CD4-positive, alpha-beta memory T cell (primary cell): ENCODE measurements at regions of chr7 and their contacts with region 1.

Region 1: DNA sequence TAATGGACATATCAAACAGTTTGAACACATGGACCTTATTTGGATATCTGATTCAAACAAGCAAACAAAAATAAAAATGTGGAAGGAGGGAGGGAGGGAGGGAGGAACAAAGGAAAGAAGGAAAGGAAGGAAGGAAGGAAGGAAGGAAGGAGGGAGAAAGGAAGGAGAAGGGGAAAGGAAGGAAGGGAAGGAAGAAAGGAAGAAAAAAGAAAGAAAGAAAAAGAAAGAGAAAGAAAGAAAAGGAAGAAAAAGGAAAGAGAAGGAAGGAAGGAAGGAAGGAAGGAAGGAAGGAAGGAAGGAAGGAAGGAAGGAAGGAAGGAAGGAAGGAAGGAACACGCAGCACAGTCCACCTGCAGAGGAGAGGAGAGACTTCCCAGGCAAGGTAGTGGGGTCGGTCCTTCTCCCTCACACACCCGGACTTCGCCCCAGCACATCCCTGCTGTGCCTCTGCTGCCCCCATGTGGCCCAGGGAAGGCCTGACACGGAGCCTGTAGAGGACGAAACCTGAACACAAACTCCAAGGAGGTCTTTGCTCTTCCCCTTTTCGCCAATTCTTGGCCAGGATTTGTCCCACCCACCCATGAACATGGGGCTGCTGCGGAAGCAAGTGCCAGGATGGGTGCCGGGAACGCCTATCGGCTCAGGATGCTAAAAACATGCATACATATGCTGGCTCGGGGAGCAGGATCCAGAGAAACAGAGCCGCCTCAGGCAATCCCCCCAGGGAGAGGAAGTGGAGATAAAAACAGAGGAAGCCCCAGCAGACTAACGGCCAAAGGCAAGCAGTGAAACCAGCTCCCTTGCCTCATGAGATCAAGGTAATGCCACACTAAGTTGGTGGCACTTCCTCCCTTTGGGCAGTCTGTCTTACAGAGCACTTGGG is 52.3 kb upstream of the DGKI start:
- DNase-seq: peak; percentile 58 to 74 (median 62)
- H3K4me3 ChIP-seq: no peak overlapping the region
- H3K4me3 Mint-ChIP-seq: peak overlapping the region in 7 of 8 donors; percentile 8 to 66 (median 43)
- H3K27ac ChIP-seq: no peak overlapping the region
- H3K27ac Mint-ChIP-seq: peak overlapping the region; percentile 36 to 81 (median 70)
- H3K4me1 ChIP-seq: peaks cover 9% of the 10 kb centered on the region
- H3K4me1 Mint-ChIP-seq: peaks cover 10 to 21% (median 17%) of the 10 kb centered on the region in 4 donors
- H3K27me3 ChIP-seq: no peaks in the 10 kb centered on the region
- H3K27me3 Mint-ChIP-seq: no peaks in the 10 kb centered on the region

Region 2: GRCh38 chr7:137656227-137656849 is 242.7 kb before region 1 on chr7:
- CTCF ChIA-PET with region 1: interaction called, 12 read pairs
- POLR2A ChIA-PET with region 1: no interaction called
- intact Hi-C with region 1: loop called (anchors 1 kb)
- DNase-seq: peak; percentile 20 to 59 (median 32)
- H3K4me3 ChIP-seq: no peak overlapping the region
- H3K4me3 Mint-ChIP-seq: no peak overlapping the region
- H3K27ac ChIP-seq: no peak overlapping the region
- H3K27ac Mint-ChIP-seq: no peak overlapping the region
- H3K4me1 ChIP-seq: no peaks in the 10 kb centered on the region
- H3K4me1 Mint-ChIP-seq: peaks cover 0 to 4% (median 0%) of the 10 kb centered on the region in 4 donors
- H3K27me3 ChIP-seq: no peaks in the 10 kb centered on the region
- H3K27me3 Mint-ChIP-seq: peaks cover 5% of the 10 kb centered on the region in 2 donors

Region 3: DNA sequence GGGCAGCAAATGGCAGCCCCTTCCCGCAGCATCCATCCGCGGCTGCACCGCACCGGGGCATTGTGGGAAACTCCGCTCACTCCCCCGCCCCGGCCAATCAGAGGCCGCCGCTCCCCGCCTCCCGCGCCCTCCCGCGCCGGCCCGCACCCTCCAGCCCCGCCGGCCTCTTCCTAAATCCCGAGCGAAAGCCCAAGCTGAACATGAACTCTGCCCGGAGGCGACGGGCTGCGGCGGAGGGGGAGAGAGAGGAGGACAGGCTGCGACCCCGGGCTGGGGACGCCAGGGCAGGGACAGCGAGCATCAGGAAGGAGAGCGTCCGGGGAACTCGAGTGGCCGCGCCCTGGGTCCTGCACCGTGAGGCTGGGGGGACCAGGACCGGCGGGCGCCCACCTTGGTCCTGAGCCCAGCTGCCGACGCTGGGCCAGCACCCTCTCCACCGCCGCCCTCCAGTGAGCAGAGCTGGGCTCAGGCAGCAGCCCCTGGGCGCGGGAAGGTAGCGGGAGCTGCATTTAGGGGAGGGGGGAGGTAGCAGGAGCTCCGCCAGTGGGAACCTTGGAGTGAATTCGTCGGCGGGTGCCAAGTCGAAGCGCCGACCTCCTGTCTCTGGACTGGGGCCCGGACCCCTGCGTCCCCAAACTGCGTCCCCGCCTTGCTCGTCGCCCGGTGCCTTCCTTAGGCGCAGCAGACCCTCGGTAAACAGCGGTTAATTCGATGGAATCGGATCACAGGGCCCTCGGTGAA is 52.1 kb before region 1 on chr7 and contains the start of gene DGKI:
- CTCF ChIA-PET with region 1: no interaction called
- POLR2A ChIA-PET with region 1: no interaction called
- intact Hi-C with region 1: no loop called
- DNase-seq: peak in 1 of 5 donors; percentile 2
- H3K4me3 ChIP-seq: no peak within 1 kb of the TSS
- H3K4me3 Mint-ChIP-seq: peak within 1 kb of the TSS; percentile 54 to 83 (median 71)
- H3K27ac ChIP-seq: no peak within 1 kb of the TSS
- H3K27ac Mint-ChIP-seq: peak within 1 kb of the TSS in 1 of 7 donors; percentile 3
- H3K4me1 ChIP-seq: peaks cover 12% of the 10 kb centered on the region
- H3K4me1 Mint-ChIP-seq: peaks cover 4 to 33% (median 13%) of the 10 kb centered on the region in 4 donors
- H3K27me3 ChIP-seq: peaks cover 33% of the 10 kb centered on the region
- H3K27me3 Mint-ChIP-seq: peaks cover 42 to 45% of the 10 kb centered on the region in 2 donors
- total RNA-seq, gene DGKI: 0.11 TPM in 1 of 2 experiments, not detected in the other

Region 4: DNA sequence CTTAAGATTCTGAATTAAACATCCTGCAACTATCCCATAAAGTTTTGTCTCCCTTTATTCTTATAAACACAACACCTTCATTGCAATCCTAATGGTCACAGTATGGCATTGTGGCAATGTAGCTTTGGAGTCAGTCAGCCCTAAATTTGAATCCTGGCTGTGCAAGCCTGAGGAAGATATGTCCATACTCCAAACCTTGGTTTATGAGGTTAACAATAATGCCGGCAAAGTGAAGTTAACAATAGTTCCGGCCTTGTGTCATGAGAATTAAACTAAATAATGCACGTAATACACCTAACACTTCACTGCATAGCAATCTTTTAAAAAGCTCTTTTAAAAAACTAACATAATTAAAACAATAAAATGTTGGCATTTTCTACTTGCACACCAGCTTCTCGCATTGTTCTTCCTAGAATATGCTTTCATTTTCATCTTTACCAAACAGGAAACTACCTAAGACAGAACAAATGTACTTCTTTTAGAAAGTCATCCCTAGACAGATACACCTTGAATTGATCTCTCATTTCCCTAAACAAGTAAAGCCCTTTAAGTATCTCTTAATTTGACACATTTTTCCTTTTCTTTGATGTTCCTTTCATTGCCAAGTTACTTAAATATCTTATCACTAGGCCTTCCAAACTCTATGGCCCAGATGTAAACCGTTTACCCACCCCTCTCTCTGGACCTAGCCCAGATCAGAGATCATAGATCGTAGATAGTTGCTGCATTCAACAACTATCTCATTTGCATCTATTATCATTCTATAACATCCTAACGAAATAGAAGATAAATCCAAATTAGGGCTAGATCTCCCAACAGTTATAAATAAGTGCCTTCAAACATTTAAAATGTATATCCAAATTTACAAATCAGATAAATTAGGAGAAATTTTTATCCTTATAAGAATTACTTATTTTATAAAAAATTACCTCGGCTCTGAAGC is 36.1 kb after region 1 on chr7:
- CTCF ChIA-PET with region 1: interaction called, 20 read pairs
- POLR2A ChIA-PET with region 1: no interaction called
- intact Hi-C with region 1: no loop called
- DNase-seq: peak in 4 of 5 donors; percentile 21 to 43 (median 28)
- H3K4me3 ChIP-seq: peak overlapping the region; percentile 19 to 43
- H3K4me3 Mint-ChIP-seq: peak overlapping the region; percentile 88 to 95 (median 90)
- H3K27ac ChIP-seq: peak overlapping the region; percentile 66
- H3K27ac Mint-ChIP-seq: peak overlapping the region; percentile 87 to 98 (median 97)
- H3K4me1 ChIP-seq: peaks cover 35% of the 10 kb centered on the region
- H3K4me1 Mint-ChIP-seq: peaks cover 37 to 70% (median 50%) of the 10 kb centered on the region in 4 donors
- H3K27me3 ChIP-seq: no peaks in the 10 kb centered on the region
- H3K27me3 Mint-ChIP-seq: no peaks in the 10 kb centered on the region

Region 5: DNA sequence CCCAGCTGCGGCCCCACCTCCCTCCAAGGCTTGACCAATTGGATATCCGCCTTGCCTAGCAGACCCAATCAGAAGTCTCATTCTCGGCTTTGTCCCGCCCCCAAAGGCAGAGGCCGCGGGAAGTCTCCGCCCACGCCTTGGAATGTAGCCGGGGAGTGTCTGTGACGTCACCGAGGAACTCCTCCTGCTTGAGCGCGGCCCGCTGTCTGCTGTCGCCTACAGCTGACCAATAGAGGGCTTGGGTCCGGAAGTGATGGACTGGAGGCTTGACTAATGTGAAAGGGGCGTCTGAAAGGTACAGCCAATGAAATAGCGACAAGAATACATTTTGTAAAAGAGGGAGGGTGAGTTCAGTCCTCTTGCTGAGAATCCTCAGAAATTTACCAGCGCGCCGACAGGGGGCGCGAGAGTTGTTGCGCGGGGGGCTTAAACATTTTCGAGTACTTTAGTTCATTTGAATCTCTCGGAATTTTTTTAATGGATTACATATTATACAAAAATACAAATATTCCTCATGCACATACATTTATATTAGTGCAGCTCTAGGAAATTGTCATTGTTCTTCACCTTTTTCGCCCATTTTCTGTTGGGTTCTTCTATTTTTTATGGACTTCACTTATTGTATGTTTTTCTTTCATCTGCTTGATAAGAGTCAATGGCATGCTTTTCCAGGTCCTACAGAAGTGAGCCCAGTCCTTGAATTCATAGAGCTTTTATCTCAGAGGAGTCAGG is 103.2 kb after region 1 on chr7:
- CTCF ChIA-PET with region 1: interaction called, 594 read pairs
- POLR2A ChIA-PET with region 1: interaction called, 12 read pairs
- intact Hi-C with region 1: no loop called
- DNase-seq: peak; percentile 98 to 99 (median 99)
- H3K4me3 ChIP-seq: peak overlapping the region; percentile 86 to 99
- H3K4me3 Mint-ChIP-seq: peak overlapping the region; percentile 93 to 98 (median 95)
- H3K27ac ChIP-seq: peak overlapping the region; percentile 87
- H3K27ac Mint-ChIP-seq: peak overlapping the region; percentile 81 to 98 (median 92)
- H3K4me1 ChIP-seq: peaks cover 37% of the 10 kb centered on the region
- H3K4me1 Mint-ChIP-seq: peaks cover 28 to 50% (median 35%) of the 10 kb centered on the region in 4 donors
- H3K27me3 ChIP-seq: no peaks in the 10 kb centered on the region
- H3K27me3 Mint-ChIP-seq: no peaks in the 10 kb centered on the region

Region 6: GRCh38 chr7:138151731-138152577 is 252.9 kb after region 1 on chr7:
- CTCF ChIA-PET with region 1: no interaction called
- POLR2A ChIA-PET with region 1: no interaction called
- intact Hi-C with region 1: no loop called
- DNase-seq: no peak
- H3K4me3 ChIP-seq: no peak overlapping the region
- H3K4me3 Mint-ChIP-seq: no peak overlapping the region
- H3K27ac ChIP-seq: no peak overlapping the region
- H3K27ac Mint-ChIP-seq: no peak overlapping the region
- H3K4me1 ChIP-seq: no peaks in the 10 kb centered on the region
- H3K4me1 Mint-ChIP-seq: peaks cover 1 to 5% (median 4%) of the 10 kb centered on the region in 4 donors
- H3K27me3 ChIP-seq: no peaks in the 10 kb centered on the region
- H3K27me3 Mint-ChIP-seq: peaks cover 0 to 12% of the 10 kb centered on the region in 2 donors

Region 7: DNA sequence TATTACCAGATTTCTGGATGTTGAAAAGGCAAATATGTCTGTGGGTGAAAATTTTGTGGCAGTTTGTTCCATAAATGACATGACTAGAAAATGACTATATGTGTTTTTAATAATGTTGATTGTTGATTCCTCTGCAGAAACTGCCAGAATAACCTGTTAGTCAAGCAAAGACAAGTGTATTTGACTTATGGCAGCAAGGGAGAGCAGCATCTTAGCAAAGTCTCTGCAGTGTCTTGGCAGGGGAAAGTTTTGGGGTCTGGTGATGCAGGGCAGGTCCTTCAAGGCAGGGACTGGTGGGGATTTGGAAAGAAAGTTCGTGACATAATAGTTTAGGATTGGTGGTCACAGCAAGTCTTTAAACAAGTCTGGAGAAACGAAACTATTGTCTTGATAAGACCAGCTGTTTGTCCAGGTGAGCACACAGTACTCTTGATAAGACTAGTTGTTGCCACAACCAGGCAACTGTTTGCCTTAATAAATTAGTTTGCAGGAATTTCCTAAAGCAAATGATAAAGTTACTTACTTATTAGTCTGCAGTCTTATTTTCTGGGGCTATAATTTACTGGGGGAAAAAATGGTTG is 313.1 kb after region 1 on chr7:
- CTCF ChIA-PET with region 1: no interaction called
- POLR2A ChIA-PET with region 1: no interaction called
- intact Hi-C with region 1: no loop called
- DNase-seq: no peak
- H3K4me3 ChIP-seq: no peak overlapping the region
- H3K4me3 Mint-ChIP-seq: no peak overlapping the region
- H3K27ac ChIP-seq: no peak overlapping the region
- H3K27ac Mint-ChIP-seq: no peak overlapping the region
- H3K4me1 ChIP-seq: no peaks in the 10 kb centered on the region
- H3K4me1 Mint-ChIP-seq: no peaks in the 10 kb centered on the region
- H3K27me3 ChIP-seq: no peaks in the 10 kb centered on the region
- H3K27me3 Mint-ChIP-seq: peaks cover 0 to 5% of the 10 kb centered on the region in 2 donors

Region 8: GRCh38 chr7:138459413-138460175 is 560.5 kb after region 1 on chr7:
- CTCF ChIA-PET with region 1: no interaction called
- POLR2A ChIA-PET with region 1: no interaction called
- intact Hi-C with region 1: loop called (anchors 10 kb)
- DNase-seq: peak; percentile 98 to 99 (median 98)
- H3K4me3 ChIP-seq: peak overlapping the region in 1 of 2 donors; percentile 49
- H3K4me3 Mint-ChIP-seq: peak overlapping the region; percentile 73 to 94 (median 84)
- H3K27ac ChIP-seq: peak overlapping the region; percentile 2
- H3K27ac Mint-ChIP-seq: peak overlapping the region; percentile 58 to 95 (median 85)
- H3K4me1 ChIP-seq: peaks cover 15% of the 10 kb centered on the region
- H3K4me1 Mint-ChIP-seq: peaks cover 15 to 30% (median 23%) of the 10 kb centered on the region in 4 donors
- H3K27me3 ChIP-seq: no peaks in the 10 kb centered on the region
- H3K27me3 Mint-ChIP-seq: peaks cover 0 to 3% of the 10 kb centered on the region in 2 donors